ENCODE measurements at regions of chr12 and their contacts with region 1.

Region 1: DNA sequence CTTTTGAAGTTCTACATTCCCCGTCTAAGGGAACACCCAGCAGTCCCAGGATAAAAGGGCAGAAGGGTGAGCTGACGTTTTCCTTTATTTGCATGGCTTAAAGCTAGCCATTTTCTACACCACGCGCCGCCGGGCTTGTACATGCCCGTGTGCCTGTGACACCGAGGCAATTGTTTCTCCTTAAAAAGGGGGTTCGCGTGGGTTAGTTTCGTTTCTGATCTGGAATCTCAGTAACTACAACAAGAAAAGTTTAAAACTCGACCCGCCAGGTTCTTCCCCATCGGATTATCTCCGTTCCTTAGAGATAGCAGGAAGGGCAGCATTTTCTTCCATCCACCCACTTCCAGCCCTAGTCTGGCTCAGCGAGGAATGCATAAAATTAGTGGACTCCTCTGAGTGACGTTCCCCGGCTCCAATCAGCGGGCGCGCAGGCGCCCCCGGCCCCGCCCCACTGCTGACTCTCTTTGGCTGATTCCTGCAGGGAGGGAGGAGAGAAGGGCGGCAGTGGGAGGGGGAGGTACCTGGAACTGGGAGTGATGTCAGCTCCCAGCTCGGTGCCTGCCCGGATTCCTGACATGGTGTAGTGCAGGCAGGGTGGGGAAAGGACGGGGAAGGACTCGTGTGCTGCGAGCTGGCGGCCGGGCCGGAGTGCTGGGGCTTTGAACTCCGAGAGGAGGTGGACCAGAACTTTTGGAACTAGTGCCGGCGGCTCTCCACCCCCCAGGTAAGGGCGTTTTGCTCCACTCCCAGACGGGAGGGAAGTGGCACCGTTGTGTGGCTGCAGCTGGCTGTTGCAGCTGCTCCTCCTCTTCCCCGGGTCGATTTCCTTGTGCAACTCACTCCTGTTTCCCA is at the start of gene PPFIBP1:
- DNase-seq: peak; percentile 96
- H3K4me3 Mint-ChIP-seq: peak within 1 kb of the TSS; percentile 96
- H3K27ac Mint-ChIP-seq: peak within 1 kb of the TSS; percentile 91
- H3K4me1 Mint-ChIP-seq: peaks cover 34% of the 10 kb centered on the region
- H3K27me3 Mint-ChIP-seq: peaks cover 42% of the 10 kb centered on the region
- total RNA-seq, gene PPFIBP1: 29.0 and 32.0 TPM in 2 replicates

Region 2: DNA sequence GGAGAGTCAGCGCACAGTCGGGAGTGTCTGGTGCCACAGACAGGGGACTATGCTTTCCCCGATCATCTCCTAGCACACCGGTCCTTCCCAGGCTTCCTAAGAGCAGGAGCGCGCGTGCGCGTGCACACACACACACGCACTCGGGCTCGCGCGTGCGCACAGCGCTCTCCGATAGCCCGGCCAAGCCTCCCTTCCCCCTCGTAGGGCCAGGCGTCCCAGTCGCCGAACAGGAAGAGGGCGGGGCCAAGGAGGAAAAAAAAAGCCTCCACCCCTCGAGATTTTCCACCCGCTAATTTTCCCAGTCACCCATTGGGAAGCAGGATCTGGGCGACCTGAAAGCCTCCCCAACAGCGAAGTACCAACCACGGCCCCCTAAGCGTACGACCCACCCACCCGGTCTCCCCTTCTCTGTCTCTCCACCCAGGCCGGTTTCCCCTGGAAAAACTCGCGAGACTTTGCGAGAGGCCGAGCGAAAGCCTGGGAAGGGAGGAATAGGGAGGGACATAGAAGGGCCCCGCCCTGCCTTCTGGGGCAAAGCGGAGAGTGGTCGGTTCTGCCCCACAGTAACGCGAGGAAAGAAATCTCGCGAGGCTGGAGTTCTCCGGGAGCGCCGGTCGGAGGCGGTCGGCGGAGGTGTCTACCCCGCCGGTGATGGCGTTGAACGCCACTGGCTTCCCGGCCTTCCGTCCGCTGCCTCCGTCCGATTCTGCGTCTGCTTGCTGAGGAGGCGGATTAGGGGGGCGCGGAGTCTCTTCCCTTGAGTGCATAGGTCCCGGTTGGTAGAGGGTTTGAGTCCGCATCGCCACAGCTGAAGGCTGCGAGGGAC is 585.8 kb before region 1 on chr12 and contains the starts of genes FGFR1OP2 and INTS13:
- intact Hi-C with region 1: loop called (anchors 10 kb)
- DNase-seq: peak; percentile 99
- H3K4me3 Mint-ChIP-seq: peak within 1 kb of the TSS; percentile 94
- H3K27ac Mint-ChIP-seq: peak within 1 kb of the TSS; percentile 97
- H3K4me1 Mint-ChIP-seq: peaks cover 55% of the 10 kb centered on the region
- H3K27me3 Mint-ChIP-seq: no peaks in the 10 kb centered on the region
- total RNA-seq, gene FGFR1OP2: 45.7 and 46.7 TPM in 2 replicates
- total RNA-seq, gene INTS13: 49.7 and 51.3 TPM in 2 replicates

Region 3: DNA sequence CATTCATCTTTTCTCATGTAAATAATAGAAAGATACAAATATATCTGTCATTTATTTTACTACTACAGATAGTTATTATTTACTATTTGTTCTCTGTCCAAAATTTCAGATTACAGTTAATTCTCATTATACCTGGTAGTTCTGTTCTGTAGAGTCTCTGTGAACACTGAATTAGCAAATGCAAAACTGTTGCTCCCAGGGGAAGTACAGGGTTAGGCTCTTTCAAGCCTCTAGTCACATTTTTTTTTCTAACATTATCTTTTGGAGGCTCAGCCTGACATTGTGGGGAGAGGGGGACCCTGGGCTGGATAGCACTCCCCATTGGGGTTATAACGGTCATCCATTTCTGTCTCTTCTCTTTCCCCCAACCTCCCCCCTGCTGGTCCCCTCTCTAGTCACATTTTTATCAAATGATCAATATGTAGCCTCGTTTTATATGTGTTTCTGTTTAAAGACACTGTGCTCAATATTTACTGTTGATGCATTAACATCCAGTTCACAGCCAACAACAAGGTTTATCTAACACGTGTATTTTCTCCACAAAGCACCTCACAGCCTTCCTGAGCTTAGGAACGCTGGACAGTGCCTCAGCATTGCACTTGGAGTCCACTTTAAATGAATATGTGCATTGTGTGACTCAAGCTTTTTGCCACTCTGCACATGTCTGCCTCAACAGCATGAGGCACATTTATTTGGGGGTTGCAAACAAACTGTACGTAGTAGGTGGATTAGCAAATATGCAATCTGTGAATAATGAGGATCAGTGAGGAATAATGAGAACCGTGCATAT is 72.6 kb before region 1 on chr12:
- intact Hi-C with region 1: no loop called
- DNase-seq: no peak
- H3K4me3 Mint-ChIP-seq: no peak overlapping the region
- H3K27ac Mint-ChIP-seq: no peak overlapping the region
- H3K4me1 Mint-ChIP-seq: peaks cover 2% of the 10 kb centered on the region
- H3K27me3 Mint-ChIP-seq: peaks cover 1% of the 10 kb centered on the region

Region 4: DNA sequence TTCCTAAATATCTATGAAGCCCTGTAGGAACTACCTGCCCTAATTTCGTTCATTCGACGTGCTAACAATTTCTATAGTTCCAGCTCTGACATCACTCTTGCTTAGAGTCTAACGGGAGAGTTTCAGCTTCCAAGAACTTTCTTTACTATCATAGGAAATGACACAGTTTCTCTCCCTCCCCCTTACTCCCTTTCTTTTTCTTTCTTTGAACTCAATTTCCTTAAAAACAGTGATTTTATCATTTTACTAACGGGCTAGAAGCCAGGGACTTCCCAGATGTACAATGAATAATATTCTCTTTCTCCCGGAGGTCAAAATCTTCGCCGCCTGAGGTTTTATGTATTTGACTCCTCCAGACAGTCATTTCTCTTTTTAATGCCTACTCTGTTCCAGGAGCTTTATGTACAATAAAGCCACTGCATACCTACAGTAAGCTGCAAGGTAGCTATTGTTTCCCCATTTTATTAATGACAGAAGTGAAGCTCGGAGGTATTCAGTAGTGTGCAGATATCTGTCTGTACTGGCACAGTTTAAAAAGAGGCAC is 61.6 kb before region 1 on chr12:
- intact Hi-C with region 1: loop called (anchors 2 kb)
- DNase-seq: peak; percentile 60
- H3K4me3 Mint-ChIP-seq: peak overlapping the region; percentile 27
- H3K27ac Mint-ChIP-seq: peak overlapping the region; percentile 68
- H3K4me1 Mint-ChIP-seq: peaks cover 58% of the 10 kb centered on the region
- H3K27me3 Mint-ChIP-seq: no peaks in the 10 kb centered on the region

Region 5: DNA sequence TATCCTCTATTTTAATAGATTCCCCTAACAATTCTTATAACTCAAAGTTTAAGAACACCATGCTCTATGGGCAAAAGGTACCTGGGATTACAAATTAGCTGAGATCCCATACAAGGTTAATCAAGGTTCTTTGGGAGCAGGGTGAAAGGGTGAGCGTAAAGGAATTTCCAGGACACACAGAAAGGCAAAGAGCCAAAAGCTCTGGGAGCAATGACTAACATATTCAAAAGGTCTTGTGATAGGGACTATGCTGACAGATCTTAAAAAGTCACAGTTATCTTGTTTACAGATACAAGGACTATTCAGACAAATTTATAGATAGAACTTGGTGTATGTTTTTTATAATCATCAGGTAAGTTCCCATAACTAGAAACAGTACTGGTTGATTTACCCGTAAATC is 19.4 kb before region 1 on chr12:
- intact Hi-C with region 1: no loop called
- DNase-seq: no peak
- H3K4me3 Mint-ChIP-seq: no peak overlapping the region
- H3K27ac Mint-ChIP-seq: no peak overlapping the region
- H3K4me1 Mint-ChIP-seq: peaks cover 21% of the 10 kb centered on the region
- H3K27me3 Mint-ChIP-seq: peaks cover 30% of the 10 kb centered on the region

Region 6: GRCh38 chr12:27534060-27534764 is 10.3 kb after region 1 on chr12:
- intact Hi-C with region 1: loop called (anchors 1 kb)
- DNase-seq: peak; percentile 78
- H3K4me3 Mint-ChIP-seq: peak overlapping the region; percentile 58
- H3K27ac Mint-ChIP-seq: peak overlapping the region; percentile 68
- H3K4me1 Mint-ChIP-seq: peaks cover 33% of the 10 kb centered on the region
- H3K27me3 Mint-ChIP-seq: peaks cover 5% of the 10 kb centered on the region

Region 7: GRCh38 chr12:27710592-27711316 is 186.9 kb after region 1 on chr12 and contains the start of gene MRPS35:
- intact Hi-C with region 1: loop called (anchors 5 kb)
- DNase-seq: peak; percentile 98
- H3K4me3 Mint-ChIP-seq: peak within 1 kb of the TSS; percentile 95
- H3K27ac Mint-ChIP-seq: peak within 1 kb of the TSS; percentile 91
- H3K4me1 Mint-ChIP-seq: peaks cover 31% of the 10 kb centered on the region
- H3K27me3 Mint-ChIP-seq: peaks cover 9% of the 10 kb centered on the region
- total RNA-seq, gene MRPS35: 57.7 and 58.1 TPM in 2 replicates

Region 8: GRCh38 chr12:27762757-27763156 is 238.9 kb after region 1 on chr12:
- intact Hi-C with region 1: no loop called
- DNase-seq: peak; percentile 69
- H3K4me3 Mint-ChIP-seq: no peak overlapping the region
- H3K27ac Mint-ChIP-seq: no peak overlapping the region
- H3K4me1 Mint-ChIP-seq: peaks cover 15% of the 10 kb centered on the region
- H3K27me3 Mint-ChIP-seq: no peaks in the 10 kb centered on the region

Region 9: GRCh38 chr12:27807063-27807703 is 283.3 kb after region 1 on chr12:
- intact Hi-C with region 1: no loop called
- DNase-seq: peak; percentile 65
- H3K4me3 Mint-ChIP-seq: peak overlapping the region; percentile 3
- H3K27ac Mint-ChIP-seq: peak overlapping the region; percentile 43
- H3K4me1 Mint-ChIP-seq: peaks cover 17% of the 10 kb centered on the region
- H3K27me3 Mint-ChIP-seq: peaks cover 10% of the 10 kb centered on the region